ENCODE measurements at regions of chr2 and their contacts with region 1.

Region 1: GRCh38 chr2:105344704-105345345 is 7.5 kb downstream of the C2orf49 start:
- DNase-seq: peak; percentile 68

Region 2: GRCh38 chr2:105521205-105521604 is 176.4 kb after region 1 on chr2:
- in situ Hi-C with region 1: loop called (anchors 10 kb)
- DNase-seq: peak; percentile 57

Measured in ACHN (cell line).